Natural killer cell (primary cell): ENCODE measurements at regions of chr7 and their contacts with region 1.

Region 1: DNA sequence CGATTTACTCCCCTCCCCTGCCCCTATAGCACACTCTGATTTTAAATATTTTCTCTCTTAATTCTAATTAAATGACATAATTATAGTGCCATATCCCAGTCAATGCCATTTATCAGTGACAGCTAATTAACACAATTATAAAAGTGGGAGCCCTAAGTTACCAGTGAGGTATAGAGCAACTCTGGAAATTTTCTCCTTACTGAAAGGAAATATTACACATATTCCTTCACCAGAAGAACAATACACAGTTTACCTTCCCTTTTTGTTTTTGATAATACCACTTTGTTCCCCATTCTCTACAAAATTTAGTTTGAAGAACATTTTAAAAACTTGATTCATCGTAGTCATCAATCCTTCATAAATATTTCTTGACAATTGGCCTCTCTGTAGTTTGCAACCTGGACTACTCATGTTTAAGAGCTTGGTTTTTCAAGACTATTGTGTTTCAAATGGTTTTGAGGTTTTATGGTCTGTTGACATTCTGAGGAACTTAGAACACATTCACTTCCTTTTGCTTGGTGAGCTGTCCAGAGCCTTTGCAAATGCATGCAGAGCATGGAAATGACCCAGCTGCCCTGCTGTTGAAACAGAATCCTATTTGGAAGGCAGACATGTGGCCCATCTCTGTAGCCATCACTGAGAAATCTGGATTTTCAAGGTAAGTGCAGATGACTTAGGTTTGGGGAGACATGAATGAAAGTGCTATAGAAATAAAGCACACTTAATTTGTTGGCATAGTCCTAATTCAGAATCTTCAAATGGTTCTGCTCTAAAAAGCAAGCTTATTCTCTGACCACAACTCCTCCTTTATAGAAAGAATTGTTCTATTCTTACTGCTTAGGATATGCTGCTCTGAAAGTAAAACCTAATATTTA is at the start of gene GPR141:
- DNase-seq: peak in 1 of 2 donors; percentile 14
- ATAC-seq: peak; percentile 65 to 80 (median 67)
- H3K4me3 ChIP-seq: peak within 1 kb of the TSS; percentile 63
- H3K4me3 Mint-ChIP-seq: peak within 1 kb of the TSS; percentile 86
- H3K27ac ChIP-seq: peak within 1 kb of the TSS; percentile 67
- H3K27ac Mint-ChIP-seq: peak within 1 kb of the TSS; percentile 92 to 93
- H3K4me1 ChIP-seq: peaks cover 13% of the 10 kb centered on the region
- H3K4me1 Mint-ChIP-seq: peaks cover 52 to 59% of the 10 kb centered on the region in 2 donors
- H3K27me3 ChIP-seq: no peaks in the 10 kb centered on the region
- H3K27me3 Mint-ChIP-seq: peaks cover 0 to 3% of the 10 kb centered on the region in 2 donors
- CTCF ChIP-seq: no peak
- total RNA-seq, gene GPR141: 30.2 to 68.1 (median 55.2) TPM

Region 2: GRCh38 chr7:37635346-37635745 is 48.1 kb before region 1 on chr7:
- intact Hi-C with region 1: loop called (anchors 10 kb)
- DNase-seq: no peak
- ATAC-seq: peak in 1 of 3 donors; percentile 19
- H3K4me3 ChIP-seq: no peak overlapping the region
- H3K4me3 Mint-ChIP-seq: peak overlapping the region; percentile 83
- H3K27ac ChIP-seq: peak overlapping the region; percentile 10
- H3K27ac Mint-ChIP-seq: peak overlapping the region; percentile 60 to 85
- H3K4me1 ChIP-seq: peaks cover 9% of the 10 kb centered on the region
- H3K4me1 Mint-ChIP-seq: peaks cover 77 to 86% of the 10 kb centered on the region in 2 donors
- H3K27me3 ChIP-seq: no peaks in the 10 kb centered on the region
- H3K27me3 Mint-ChIP-seq: no peaks in the 10 kb centered on the region
- CTCF ChIP-seq: no peak

Region 3: GRCh38 chr7:37701769-37702168 is 18.3 kb after region 1 on chr7:
- intact Hi-C with region 1: loop called (anchors 2 kb)
- DNase-seq: no peak
- ATAC-seq: no peak
- H3K4me3 ChIP-seq: no peak overlapping the region
- H3K4me3 Mint-ChIP-seq: no peak overlapping the region
- H3K27ac ChIP-seq: no peak overlapping the region
- H3K27ac Mint-ChIP-seq: peak overlapping the region; percentile 74 to 79
- H3K4me1 ChIP-seq: no peaks in the 10 kb centered on the region
- H3K4me1 Mint-ChIP-seq: peaks cover 65 to 69% of the 10 kb centered on the region in 2 donors
- H3K27me3 ChIP-seq: no peaks in the 10 kb centered on the region
- H3K27me3 Mint-ChIP-seq: no peaks in the 10 kb centered on the region
- CTCF ChIP-seq: no peak

Region 4: GRCh38 chr7:37815671-37816371 is 132.3 kb after region 1 on chr7:
- intact Hi-C with region 1: no loop called
- DNase-seq: peak in 1 of 2 donors; percentile 5
- ATAC-seq: peak; percentile 82 to 95 (median 90)
- H3K4me3 ChIP-seq: no peak overlapping the region
- H3K4me3 Mint-ChIP-seq: peak overlapping the region; percentile 25
- H3K27ac ChIP-seq: no peak overlapping the region
- H3K27ac Mint-ChIP-seq: peak overlapping the region; percentile 58 to 74
- H3K4me1 ChIP-seq: no peaks in the 10 kb centered on the region
- H3K4me1 Mint-ChIP-seq: peaks cover 39 to 40% of the 10 kb centered on the region in 2 donors
- H3K27me3 ChIP-seq: no peaks in the 10 kb centered on the region
- H3K27me3 Mint-ChIP-seq: no peaks in the 10 kb centered on the region
- CTCF ChIP-seq: no peak

Region 5: GRCh38 chr7:37848297-37848696 is 164.8 kb after region 1 on chr7 and contains the start of gene NME8:
- intact Hi-C with region 1: no loop called
- DNase-seq: no peak
- ATAC-seq: no peak
- H3K4me3 ChIP-seq: no peak within 1 kb of the TSS
- H3K4me3 Mint-ChIP-seq: no peak within 1 kb of the TSS
- H3K27ac ChIP-seq: no peak within 1 kb of the TSS
- H3K27ac Mint-ChIP-seq: peak within 1 kb of the TSS in 1 of 2 donors; percentile 21
- H3K4me1 ChIP-seq: no peaks in the 10 kb centered on the region
- H3K4me1 Mint-ChIP-seq: peaks cover 0 to 4% of the 10 kb centered on the region in 2 donors
- H3K27me3 ChIP-seq: no peaks in the 10 kb centered on the region
- H3K27me3 Mint-ChIP-seq: peaks cover 4 to 17% of the 10 kb centered on the region in 2 donors
- CTCF ChIP-seq: no peak
- total RNA-seq, gene NME8: 23.5 to 37.0 (median 27.1) TPM

Region 6: DNA sequence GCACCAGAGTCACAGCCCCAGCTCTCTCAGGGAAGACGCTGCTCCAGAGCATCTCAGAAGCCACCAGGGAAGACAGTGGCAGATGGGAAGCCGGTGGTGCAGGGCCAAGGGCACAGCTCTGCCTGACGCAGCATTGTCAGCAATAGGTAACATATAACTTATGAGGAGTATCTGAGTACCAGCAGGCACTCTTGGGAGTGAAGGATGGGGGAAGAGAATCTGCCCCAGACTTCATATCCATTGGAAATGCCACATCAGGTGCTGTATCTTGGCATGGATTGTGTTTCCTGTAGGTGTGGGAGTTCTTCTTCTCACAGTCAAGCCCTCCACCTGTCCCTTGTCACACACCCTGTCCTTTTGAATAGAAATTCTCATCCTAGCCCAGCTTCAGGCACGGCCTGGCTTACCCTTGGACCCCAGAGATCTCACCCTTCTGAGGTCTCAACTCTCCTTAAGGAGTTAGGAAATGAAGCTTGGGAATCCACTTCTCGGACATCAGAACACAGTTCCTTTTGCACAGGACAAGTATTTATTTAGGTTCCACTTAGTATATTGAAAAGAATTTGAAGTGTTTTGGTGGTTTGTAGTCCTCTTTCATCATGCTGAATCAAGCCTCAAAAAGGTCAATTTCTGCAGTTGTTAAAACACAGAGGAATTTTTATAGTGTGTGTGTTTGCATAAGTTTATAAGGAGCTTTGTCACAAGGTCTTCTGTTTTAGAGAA is 246.9 kb after region 1 on chr7:
- intact Hi-C with region 1: no loop called
- DNase-seq: no peak
- ATAC-seq: no peak
- H3K4me3 ChIP-seq: no peak overlapping the region
- H3K4me3 Mint-ChIP-seq: no peak overlapping the region
- H3K27ac ChIP-seq: no peak overlapping the region
- H3K27ac Mint-ChIP-seq: no peak overlapping the region
- H3K4me1 ChIP-seq: no peaks in the 10 kb centered on the region
- H3K4me1 Mint-ChIP-seq: no peaks in the 10 kb centered on the region
- H3K27me3 ChIP-seq: no peaks in the 10 kb centered on the region
- H3K27me3 Mint-ChIP-seq: no peaks in the 10 kb centered on the region
- CTCF ChIP-seq: no peak

Region 7: GRCh38 chr7:38141187-38141586 is 457.7 kb after region 1 on chr7:
- intact Hi-C with region 1: no loop called
- DNase-seq: no peak
- ATAC-seq: peak; percentile 30 to 80 (median 31)
- H3K4me3 ChIP-seq: no peak overlapping the region
- H3K4me3 Mint-ChIP-seq: no peak overlapping the region
- H3K27ac ChIP-seq: no peak overlapping the region
- H3K27ac Mint-ChIP-seq: no peak overlapping the region
- H3K4me1 ChIP-seq: peaks cover 5% of the 10 kb centered on the region
- H3K4me1 Mint-ChIP-seq: peaks cover 5 to 6% of the 10 kb centered on the region in 2 donors
- H3K27me3 ChIP-seq: no peaks in the 10 kb centered on the region
- H3K27me3 Mint-ChIP-seq: peaks cover 0 to 2% of the 10 kb centered on the region in 2 donors
- CTCF ChIP-seq: no peak